GM12878 (cell line): ENCODE measurements at regions of chr4 and their contacts with region 1.

Region 1: GRCh38 chr4:113636438-113636818 is 125.1 kb downstream of the CAMK2D start:
- DNase-seq: no peak
- ATAC-seq: peak; percentile 69
- H3K4me3 ChIP-seq: peak overlapping the region; percentile 9; the same call in 1 of the 2 replicates
- H3K27ac ChIP-seq: peak overlapping the region; percentile 16
- H3K4me1 ChIP-seq: peaks cover 53% of the 10 kb centered on the region
- H3K27me3 ChIP-seq: no peaks in the 10 kb centered on the region
- CTCF ChIP-seq: peak; percentile 25 to 48 (median 42); a peak in 4 of 6 replicates
- EP300 ChIP-seq: no peak
- POLR2A ChIP-seq: no peak
- RAD21 ChIP-seq: peak; percentile 54

Region 2: GRCh38 chr4:113564493-113564892 is 71.9 kb before region 1 on chr4:
- CTCF ChIA-PET with region 1: interaction called, 9 read pairs
- POLR2A ChIA-PET with region 1: interaction called, 20 read pairs
- RAD21 ChIA-PET with region 1: interaction called, 33 read pairs
- SMC1A ChIA-PET with region 1: interaction called, 79 read pairs
- in situ Hi-C with region 1: no loop called
- intact Hi-C with region 1: no loop called
- DNase-seq: no peak
- ATAC-seq: peak; percentile 45
- H3K4me3 ChIP-seq: peak overlapping the region; percentile 12; the same call in 1 of the 2 replicates
- H3K27ac ChIP-seq: peak overlapping the region; percentile 60
- H3K4me1 ChIP-seq: peaks cover 38% of the 10 kb centered on the region
- H3K27me3 ChIP-seq: no peaks in the 10 kb centered on the region
- CTCF ChIP-seq: no peak
- EP300 ChIP-seq: no peak
- POLR2A ChIP-seq: no peak
- RAD21 ChIP-seq: no peak

Region 3: DNA sequence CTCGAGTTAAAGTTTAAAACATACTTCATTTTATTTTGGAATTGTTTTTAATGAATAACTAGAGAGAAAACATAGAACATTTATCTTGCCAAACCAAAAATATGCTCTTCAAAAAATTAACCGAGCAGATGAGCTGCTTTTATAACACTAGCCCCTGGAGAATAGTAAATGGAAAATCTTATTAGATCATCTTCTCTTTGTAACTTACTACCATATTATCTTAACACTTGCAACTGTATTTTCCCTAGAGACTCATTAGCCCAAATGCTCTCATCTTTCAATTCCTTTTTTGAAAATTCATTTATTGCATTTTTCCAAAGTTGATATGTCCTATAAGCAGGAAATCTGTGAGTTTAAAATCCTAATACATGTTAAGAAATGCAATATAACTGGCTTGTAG is 18.2 kb before region 1 on chr4:
- CTCF ChIA-PET with region 1: interaction called, 5 read pairs
- POLR2A ChIA-PET with region 1: interaction called, 6 read pairs
- RAD21 ChIA-PET with region 1: interaction called, 21 read pairs
- SMC1A ChIA-PET with region 1: interaction called, 96 read pairs
- in situ Hi-C with region 1: no loop called
- intact Hi-C with region 1: no loop called
- DNase-seq: no peak
- ATAC-seq: peak; percentile 63
- H3K4me3 ChIP-seq: no peak overlapping the region
- H3K27ac ChIP-seq: no peak overlapping the region
- H3K4me1 ChIP-seq: peaks cover 4% of the 10 kb centered on the region; the same call in 1 of the 2 replicates
- H3K27me3 ChIP-seq: no peaks in the 10 kb centered on the region
- CTCF ChIP-seq: no peak
- EP300 ChIP-seq: peak; percentile 78 to 80; a peak in 3 of 4 replicates
- POLR2A ChIP-seq: no peak
- RAD21 ChIP-seq: no peak

Region 4: DNA sequence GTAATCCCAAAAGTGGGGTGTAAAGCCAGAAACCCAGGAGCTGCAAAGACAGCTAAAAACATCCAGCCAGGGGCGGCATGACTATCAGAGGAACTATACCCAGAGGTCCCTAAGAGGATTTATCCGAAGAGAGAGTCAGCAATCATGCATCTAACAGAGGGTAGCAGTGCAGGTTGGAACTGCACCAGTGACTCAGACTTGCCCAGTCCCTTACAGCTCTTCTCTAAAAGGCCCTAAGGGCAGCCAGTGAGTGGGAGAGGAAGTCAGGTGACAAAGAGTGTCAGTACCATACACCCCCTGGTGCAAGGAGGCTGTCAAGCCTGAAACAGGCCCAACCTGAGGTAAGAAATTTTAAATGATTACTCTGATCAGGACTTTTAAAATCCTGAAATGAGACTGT is 37.0 kb after region 1 on chr4:
- CTCF ChIA-PET with region 1: interaction called, 14 read pairs
- POLR2A ChIA-PET with region 1: interaction called, 5 read pairs
- RAD21 ChIA-PET with region 1: interaction called, 24 read pairs
- SMC1A ChIA-PET with region 1: interaction called, 282 read pairs
- in situ Hi-C with region 1: no loop called
- intact Hi-C with region 1: no loop called
- DNase-seq: no peak
- ATAC-seq: peak; percentile 98
- H3K4me3 ChIP-seq: no peak overlapping the region
- H3K27ac ChIP-seq: no peak overlapping the region
- H3K4me1 ChIP-seq: no peaks in the 10 kb centered on the region
- H3K27me3 ChIP-seq: no peaks in the 10 kb centered on the region
- CTCF ChIP-seq: peak in 2 of 3 experiments; percentile 6 to 15; a peak in 2 of 6 replicates
- EP300 ChIP-seq: no peak
- POLR2A ChIP-seq: no peak
- RAD21 ChIP-seq: 0 out of 2 replicates have a peak, but pooled peaks have one; percentile 24

Region 5: GRCh38 chr4:113738251-113738650 is 101.8 kb after region 1 on chr4:
- CTCF ChIA-PET with region 1: no interaction called
- POLR2A ChIA-PET with region 1: no interaction called
- RAD21 ChIA-PET with region 1: interaction called, 14 read pairs
- SMC1A ChIA-PET with region 1: interaction called, 6 read pairs
- in situ Hi-C with region 1: no loop called
- intact Hi-C with region 1: no loop called
- DNase-seq: no peak
- ATAC-seq: no peak
- H3K4me3 ChIP-seq: no peak overlapping the region
- H3K27ac ChIP-seq: no peak overlapping the region
- H3K4me1 ChIP-seq: no peaks in the 10 kb centered on the region
- H3K27me3 ChIP-seq: no peaks in the 10 kb centered on the region
- CTCF ChIP-seq: no peak
- EP300 ChIP-seq: no peak
- POLR2A ChIP-seq: no peak
- RAD21 ChIP-seq: no peak

Region 6: DNA sequence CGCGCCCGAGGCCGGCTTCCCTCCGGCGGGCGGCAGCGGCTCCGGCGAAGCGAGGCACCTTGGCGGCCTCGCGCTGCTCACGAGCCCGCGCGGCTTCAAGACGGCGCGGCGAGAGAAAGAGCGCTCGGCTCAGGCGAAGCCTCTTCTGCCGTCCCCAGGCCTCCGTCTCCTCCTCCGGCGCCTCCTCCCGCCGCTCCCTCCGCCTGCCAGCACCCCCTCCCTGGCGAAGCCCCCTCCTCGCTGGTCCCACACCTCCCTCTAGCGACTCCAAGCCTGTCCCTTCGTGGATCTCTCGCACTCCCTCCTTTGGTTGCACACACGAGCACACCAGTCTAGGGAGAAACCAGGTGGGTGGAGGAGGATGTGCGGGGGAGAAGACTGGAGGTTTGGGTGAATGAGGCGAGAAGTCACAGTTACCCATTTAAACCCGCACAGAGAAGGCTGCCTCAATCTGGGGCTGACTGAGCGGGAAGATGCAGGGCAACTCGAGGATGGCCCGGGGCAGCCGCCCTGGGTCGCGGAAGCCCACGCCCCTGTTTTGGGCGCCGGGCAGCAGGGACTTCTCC is 125.3 kb after region 1 on chr4 and contains the start of gene CAMK2D:
- CTCF ChIA-PET with region 1: interaction called, 35 read pairs
- POLR2A ChIA-PET with region 1: interaction called, 6 read pairs
- RAD21 ChIA-PET with region 1: interaction called, 72 read pairs
- SMC1A ChIA-PET with region 1: interaction called, 23 read pairs
- in situ Hi-C with region 1: no loop called
- intact Hi-C with region 1: loop called (anchors 2 kb)
- DNase-seq: peak; percentile 81
- ATAC-seq: peak; percentile 56
- H3K4me3 ChIP-seq: peak within 1 kb of the TSS; percentile 99
- H3K27ac ChIP-seq: peak within 1 kb of the TSS; percentile 98
- H3K4me1 ChIP-seq: no peaks in the 10 kb centered on the region
- H3K27me3 ChIP-seq: no peaks in the 10 kb centered on the region
- CTCF ChIP-seq: peak; percentile 60 to 95 (median 69)
- EP300 ChIP-seq: peak in 1 of 2 experiments; percentile 33; a peak in 2 of 4 replicates
- POLR2A ChIP-seq: no peak
- RAD21 ChIP-seq: peak; percentile 89
- polyA plus RNA-seq, gene CAMK2D: 6.9 to 10.2 TPM

Region 7: DNA sequence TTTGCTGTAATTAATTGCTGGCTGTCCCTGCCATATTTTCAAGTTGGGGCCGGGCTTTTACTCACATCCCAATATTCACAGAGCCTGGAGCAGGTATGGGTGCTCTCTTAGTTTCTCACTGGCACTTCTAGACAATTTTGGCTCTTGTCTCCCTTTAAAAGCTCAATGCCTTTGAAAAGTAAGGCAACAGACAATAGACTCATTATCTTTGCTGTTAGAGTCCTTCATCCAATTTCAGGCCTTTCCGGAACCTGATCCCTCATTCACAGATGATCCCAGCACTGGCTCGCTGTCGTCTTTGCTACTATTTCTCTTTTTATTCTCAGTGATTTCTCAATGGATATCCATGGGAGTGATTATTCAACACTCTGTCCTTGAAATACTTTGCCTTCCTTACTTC is 336.4 kb after region 1 on chr4:
- CTCF ChIA-PET with region 1: no interaction called
- POLR2A ChIA-PET with region 1: no interaction called
- RAD21 ChIA-PET with region 1: no interaction called
- SMC1A ChIA-PET with region 1: no interaction called
- in situ Hi-C with region 1: no loop called
- intact Hi-C with region 1: no loop called
- DNase-seq: no peak
- ATAC-seq: no peak
- H3K4me3 ChIP-seq: no peak overlapping the region
- H3K27ac ChIP-seq: no peak overlapping the region
- H3K4me1 ChIP-seq: no peaks in the 10 kb centered on the region
- H3K27me3 ChIP-seq: no peaks in the 10 kb centered on the region
- CTCF ChIP-seq: no peak
- EP300 ChIP-seq: no peak
- POLR2A ChIP-seq: no peak
- RAD21 ChIP-seq: no peak